GM10248 (cell line): ENCODE measurements at regions of chr7 and their contacts with region 1.

Region 1: DNA sequence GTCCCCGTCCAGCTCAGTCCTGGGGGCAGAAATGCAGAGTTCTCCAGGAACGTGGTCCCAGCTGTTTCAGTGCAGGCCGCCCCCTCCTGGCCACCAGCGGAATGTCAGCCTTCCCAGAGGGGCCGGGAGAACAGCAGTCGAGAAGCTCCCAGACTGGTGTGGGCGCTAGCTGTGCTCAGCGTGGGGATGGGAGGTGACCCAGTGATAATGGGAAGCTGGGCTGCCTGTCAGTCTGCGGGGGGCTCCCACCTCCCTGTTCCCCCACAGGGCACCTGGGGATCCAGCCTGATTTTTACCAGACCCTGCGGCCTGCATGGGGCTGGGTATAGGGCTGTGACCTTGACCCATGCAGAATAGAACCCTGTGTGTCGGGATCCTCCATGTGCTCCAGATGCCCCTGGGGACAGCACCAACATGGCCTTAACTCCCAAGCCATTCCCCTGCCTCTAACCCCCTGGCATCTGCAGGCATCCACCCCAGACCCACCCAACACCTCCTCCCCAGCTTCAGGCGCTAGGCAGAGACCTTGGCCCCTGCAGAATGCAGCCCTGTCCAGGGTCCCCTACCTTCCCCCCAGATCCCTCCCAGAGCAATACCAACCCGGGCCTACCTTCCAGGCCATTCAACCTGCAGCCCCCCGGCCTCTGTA is 946 bp upstream of the ELN start:
- DNase-seq: peak; percentile 86
- CTCF ChIP-seq: peak; percentile 98

Region 2: DNA sequence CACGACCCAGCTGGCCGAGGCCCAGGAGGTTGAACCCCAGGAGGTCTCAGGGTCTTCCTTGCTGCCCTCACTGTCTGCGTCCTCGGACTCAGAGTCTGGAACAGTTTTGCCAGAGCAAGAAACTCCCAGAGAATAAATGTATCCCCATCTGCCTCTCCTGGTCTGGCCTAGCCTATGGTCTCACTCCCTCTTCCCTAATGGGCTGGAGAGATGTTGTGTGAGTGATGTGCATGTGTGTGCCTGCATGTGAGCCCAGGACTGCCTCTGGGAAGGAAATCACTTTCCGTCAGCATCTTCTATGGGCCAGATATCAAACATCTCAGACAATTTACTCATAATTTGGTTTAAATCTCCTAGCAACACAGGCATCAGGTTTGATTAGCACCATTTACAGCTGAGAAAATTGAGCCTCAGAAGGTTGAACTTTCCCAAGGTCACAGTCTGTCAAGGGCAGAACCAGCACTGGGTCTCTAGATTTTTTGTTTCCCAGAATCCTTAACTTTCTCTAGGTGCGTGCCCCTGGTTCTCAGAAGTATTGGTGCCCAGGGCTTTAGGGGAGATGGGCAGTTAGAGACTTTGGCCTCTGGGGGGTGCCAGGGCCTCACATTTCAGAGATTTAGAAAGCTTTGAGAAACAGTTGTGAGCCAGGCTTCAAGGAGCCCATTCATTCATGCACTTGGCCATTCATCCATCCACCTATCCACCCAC is 161.1 kb before region 1 on chr7:
- CTCF ChIA-PET with region 1: interaction called, 38 read pairs
- POLR2A ChIA-PET with region 1: no interaction called
- DNase-seq: peak; percentile 50
- CTCF ChIP-seq: peak; percentile 61

Region 3: GRCh38 chr7:73978661-73979563 is 48.1 kb before region 1 on chr7:
- CTCF ChIA-PET with region 1: interaction called, 10 read pairs
- POLR2A ChIA-PET with region 1: no interaction called
- DNase-seq: peak; percentile 75
- CTCF ChIP-seq: peak; percentile 60

Region 4: DNA sequence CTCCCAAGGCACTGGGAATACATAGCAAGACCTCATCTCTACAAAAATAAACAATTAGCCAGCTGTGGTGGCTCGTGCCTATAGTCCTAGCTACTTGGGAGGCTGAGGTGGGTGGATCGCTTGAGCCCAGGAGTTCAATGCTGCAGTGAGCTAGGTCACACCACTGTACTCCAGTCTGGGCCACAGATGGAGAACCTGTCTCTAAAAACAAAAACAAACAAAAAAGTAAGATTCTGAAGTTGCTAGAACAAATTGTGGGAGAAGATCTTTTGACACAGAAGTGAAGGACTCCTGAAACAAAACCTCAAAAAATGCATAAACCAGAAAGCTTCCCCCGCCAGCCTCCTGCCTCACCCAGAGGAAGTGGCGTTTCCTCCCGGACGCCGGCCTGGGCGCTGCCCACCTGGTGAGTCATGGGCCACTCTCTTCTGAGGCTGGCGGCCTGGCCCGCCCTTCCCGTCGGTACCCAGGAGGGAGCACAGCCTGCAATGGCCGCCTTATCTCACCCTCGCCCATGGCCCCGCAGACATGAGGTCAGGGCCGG is 24.5 kb before region 1 on chr7:
- CTCF ChIA-PET with region 1: interaction called, 12 read pairs
- POLR2A ChIA-PET with region 1: no interaction called
- DNase-seq: no peak
- CTCF ChIP-seq: no peak

Region 5: DNA sequence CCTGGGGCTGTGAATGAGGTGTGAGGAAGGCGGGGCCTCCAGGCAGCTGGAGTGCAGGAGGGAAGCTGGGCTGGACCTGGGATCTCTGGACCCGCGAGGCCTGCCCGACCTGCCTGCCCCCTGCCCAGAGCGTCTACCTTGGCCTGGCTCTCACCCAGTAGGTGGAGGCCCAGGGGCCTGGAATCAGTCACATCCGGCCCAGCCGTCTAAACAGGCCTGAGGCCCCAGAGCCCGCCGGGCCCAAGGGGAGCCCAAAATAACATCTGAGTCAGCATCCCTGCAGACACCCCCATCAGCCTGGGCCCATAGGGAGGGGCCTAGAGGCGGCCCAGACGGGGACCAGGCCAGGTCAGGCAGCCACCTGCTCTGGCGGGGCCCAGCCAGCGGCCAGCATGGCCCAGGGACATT is 14.2 kb before region 1 on chr7:
- CTCF ChIA-PET with region 1: interaction called, 79 read pairs
- POLR2A ChIA-PET with region 1: no interaction called
- DNase-seq: peak; percentile 92
- CTCF ChIP-seq: no peak

Region 6: GRCh38 chr7:74043523-74043951 is 16.5 kb after region 1 on chr7:
- CTCF ChIA-PET with region 1: interaction called, 52 read pairs
- POLR2A ChIA-PET with region 1: no interaction called
- DNase-seq: no peak
- CTCF ChIP-seq: no peak

Region 7: DNA sequence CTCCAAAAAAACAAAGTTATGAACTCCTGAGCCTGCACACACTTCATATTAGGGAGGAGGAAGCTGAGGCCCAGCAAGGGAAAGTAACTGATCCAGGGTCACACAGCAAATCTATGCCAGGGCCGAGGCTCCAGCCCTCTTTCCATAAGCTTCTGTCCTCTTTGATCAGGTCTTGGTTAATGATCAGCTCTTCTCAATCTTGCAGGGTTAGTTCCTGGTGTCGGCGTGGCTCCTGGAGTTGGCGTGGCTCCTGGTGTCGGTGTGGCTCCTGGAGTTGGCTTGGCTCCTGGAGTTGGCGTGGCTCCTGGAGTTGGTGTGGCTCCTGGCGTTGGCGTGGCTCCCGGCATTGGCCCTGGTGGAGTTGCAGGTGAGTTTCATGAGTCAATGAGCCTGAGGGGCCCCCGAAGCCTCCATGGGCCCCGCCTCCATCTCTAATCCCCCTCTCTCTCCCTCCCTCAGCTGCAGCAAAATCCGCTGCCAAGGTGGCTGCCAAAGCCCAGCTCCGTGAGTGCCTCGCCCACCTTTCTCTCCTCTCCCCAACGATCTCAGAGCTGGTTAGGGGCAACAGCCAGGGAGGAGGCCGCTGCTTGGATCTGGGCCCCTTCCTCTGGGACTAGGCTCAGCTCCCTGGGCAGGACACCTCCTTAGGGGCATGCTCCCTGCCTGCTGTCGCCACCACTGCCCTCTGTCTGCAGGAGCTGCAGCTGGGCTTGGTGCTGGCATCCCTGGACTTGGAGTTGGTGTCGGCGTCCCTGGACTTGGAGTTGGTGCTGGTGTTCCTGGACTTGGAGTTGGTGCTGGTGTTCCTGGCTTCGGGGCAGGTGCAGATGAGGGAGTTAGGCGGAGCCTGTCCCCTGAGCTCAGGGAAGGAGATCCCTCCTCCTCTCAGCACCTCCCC is 32.9 kb after region 1 on chr7:
- CTCF ChIA-PET with region 1: interaction called, 17 read pairs
- POLR2A ChIA-PET with region 1: no interaction called
- DNase-seq: no peak
- CTCF ChIP-seq: no peak